Caco-2 (cell line): ENCODE measurements at regions of chr1 and their contacts with region 1.

Region 1: GRCh38 chr1:171644805-171645483 is 7.5 kb downstream of the MYOC start:
- DNase-seq: peak; percentile 83 to 88
- H3K4me3 ChIP-seq: no peak overlapping the region
- H3K4me3 Mint-ChIP-seq: no peak overlapping the region
- H3K27ac Mint-ChIP-seq: no peak overlapping the region
- H3K4me1 ChIP-seq: no peaks in the 10 kb centered on the region; the same call in 1 of the 2 replicates
- H3K4me1 Mint-ChIP-seq: peaks cover 10% of the 10 kb centered on the region
- H3K27me3 ChIP-seq: no peaks in the 10 kb centered on the region
- H3K27me3 Mint-ChIP-seq: peaks cover under 1% of the 10 kb centered on the region
- CTCF ChIP-seq: peak; percentile 79 to 82

Region 2: DNA sequence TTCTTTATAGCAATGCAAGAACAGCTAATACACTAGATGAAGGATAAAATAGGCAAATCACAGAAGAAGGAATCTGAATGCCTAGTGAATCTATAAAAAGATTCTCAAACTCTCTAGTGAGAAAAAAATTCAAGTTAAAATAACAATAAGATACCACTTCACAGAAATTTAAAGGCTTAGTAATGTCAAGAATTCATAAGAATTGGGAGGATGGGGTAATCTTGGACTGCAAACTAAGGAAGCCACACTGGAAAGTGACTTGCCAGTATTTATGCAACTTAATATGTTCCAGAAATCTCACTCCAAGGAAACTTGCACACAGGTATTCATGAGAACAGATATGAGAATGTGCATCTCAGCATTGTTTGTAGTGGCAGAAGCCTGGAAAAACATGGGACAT is 198.6 kb before region 1 on chr1:
- CTCF ChIA-PET with region 1: no interaction called
- POLR2A ChIA-PET with region 1: no interaction called
- intact Hi-C with region 1: no loop called
- DNase-seq: no peak
- H3K4me3 ChIP-seq: no peak overlapping the region
- H3K4me3 Mint-ChIP-seq: no peak overlapping the region
- H3K27ac Mint-ChIP-seq: no peak overlapping the region
- H3K4me1 ChIP-seq: no peaks in the 10 kb centered on the region
- H3K4me1 Mint-ChIP-seq: no peaks in the 10 kb centered on the region
- H3K27me3 ChIP-seq: no peaks in the 10 kb centered on the region
- H3K27me3 Mint-ChIP-seq: no peaks in the 10 kb centered on the region
- CTCF ChIP-seq: no peak

Region 3: DNA sequence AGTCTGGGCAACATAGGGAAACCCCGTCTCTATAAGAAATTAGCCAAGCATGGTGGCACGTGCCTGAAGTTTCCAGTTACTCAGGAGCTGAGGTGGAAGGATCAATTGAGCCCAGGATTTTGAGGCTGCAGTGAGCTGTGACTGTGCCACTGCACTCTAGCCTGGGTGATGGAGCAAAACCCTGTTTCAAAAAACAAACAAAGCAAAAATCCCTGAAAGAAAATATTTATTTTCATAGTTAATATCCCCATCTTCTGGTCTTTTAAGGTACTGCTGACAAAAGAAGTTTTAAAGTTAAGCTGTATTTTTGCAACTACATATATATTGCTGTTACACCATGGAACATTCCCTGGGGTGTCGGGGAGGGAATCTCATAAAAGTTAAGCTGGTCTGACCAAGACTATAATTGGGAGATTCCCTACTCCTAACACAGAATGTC is 70.9 kb after region 1 on chr1:
- CTCF ChIA-PET with region 1: interaction called, 66 read pairs
- POLR2A ChIA-PET with region 1: no interaction called
- intact Hi-C with region 1: loop called (anchors 1 kb)
- DNase-seq: peak in 1 of 2 experiments; percentile 8
- H3K4me3 ChIP-seq: no peak overlapping the region
- H3K4me3 Mint-ChIP-seq: no peak overlapping the region
- H3K27ac Mint-ChIP-seq: no peak overlapping the region
- H3K4me1 ChIP-seq: no peaks in the 10 kb centered on the region
- H3K4me1 Mint-ChIP-seq: no peaks in the 10 kb centered on the region
- H3K27me3 ChIP-seq: no peaks in the 10 kb centered on the region
- H3K27me3 Mint-ChIP-seq: no peaks in the 10 kb centered on the region
- CTCF ChIP-seq: peak; percentile 13 to 53

Region 4: GRCh38 chr1:171741872-171742576 is 97.1 kb after region 1 on chr1 and contains the start of gene VAMP4:
- CTCF ChIA-PET with region 1: interaction called, 18 read pairs
- POLR2A ChIA-PET with region 1: no interaction called
- intact Hi-C with region 1: loop called (anchors 1 kb)
- DNase-seq: peak; percentile 83 to 87
- H3K4me3 ChIP-seq: peak within 1 kb of the TSS; percentile 86
- H3K4me3 Mint-ChIP-seq: peak within 1 kb of the TSS; percentile 93
- H3K27ac Mint-ChIP-seq: peak within 1 kb of the TSS; percentile 92
- H3K4me1 ChIP-seq: 0 out of 2 replicates have a peak, but pooled peaks cover 7% of the 10 kb centered on the region
- H3K4me1 Mint-ChIP-seq: peaks cover 7% of the 10 kb centered on the region
- H3K27me3 ChIP-seq: no peaks in the 10 kb centered on the region
- H3K27me3 Mint-ChIP-seq: no peaks in the 10 kb centered on the region
- CTCF ChIP-seq: no peak
- total RNA-seq, gene VAMP4: 4.3 and 4.9 TPM in 2 replicates

Region 5: GRCh38 chr1:171781176-171781875 is 136.4 kb after region 1 on chr1 and contains the start of gene METTL13:
- CTCF ChIA-PET with region 1: interaction called, 4 read pairs
- POLR2A ChIA-PET with region 1: no interaction called
- intact Hi-C with region 1: loop called (anchors 1 kb)
- DNase-seq: peak; percentile 99
- H3K4me3 ChIP-seq: peak within 1 kb of the TSS; percentile 97
- H3K4me3 Mint-ChIP-seq: peak within 1 kb of the TSS; percentile 91
- H3K27ac Mint-ChIP-seq: peak within 1 kb of the TSS; percentile 97
- H3K4me1 ChIP-seq: no peaks in the 10 kb centered on the region; the same call in 1 of the 2 replicates
- H3K4me1 Mint-ChIP-seq: peaks cover 6% of the 10 kb centered on the region
- H3K27me3 ChIP-seq: no peaks in the 10 kb centered on the region
- H3K27me3 Mint-ChIP-seq: no peaks in the 10 kb centered on the region
- CTCF ChIP-seq: no peak
- total RNA-seq, gene METTL13: 36.9 and 40.4 TPM in 2 replicates

Region 6: GRCh38 chr1:171801487-171801891 is 156.5 kb after region 1 on chr1:
- CTCF ChIA-PET with region 1: no interaction called
- POLR2A ChIA-PET with region 1: no interaction called
- intact Hi-C with region 1: loop called (anchors 2 kb)
- DNase-seq: peak in 1 of 2 experiments; percentile 55
- H3K4me3 ChIP-seq: no peak overlapping the region
- H3K4me3 Mint-ChIP-seq: no peak overlapping the region
- H3K27ac Mint-ChIP-seq: no peak overlapping the region
- H3K4me1 ChIP-seq: no peaks in the 10 kb centered on the region
- H3K4me1 Mint-ChIP-seq: no peaks in the 10 kb centered on the region
- H3K27me3 ChIP-seq: no peaks in the 10 kb centered on the region
- H3K27me3 Mint-ChIP-seq: no peaks in the 10 kb centered on the region
- CTCF ChIP-seq: peak; percentile 59 to 76

Region 7: GRCh38 chr1:171984850-171985485 is 340.0 kb after region 1 on chr1:
- CTCF ChIA-PET with region 1: interaction called, 3 read pairs
- POLR2A ChIA-PET with region 1: no interaction called
- intact Hi-C with region 1: loop called (anchors 5 kb)
- DNase-seq: peak in 1 of 2 experiments; percentile 24
- H3K4me3 ChIP-seq: no peak overlapping the region
- H3K4me3 Mint-ChIP-seq: no peak overlapping the region
- H3K27ac Mint-ChIP-seq: no peak overlapping the region
- H3K4me1 ChIP-seq: no peaks in the 10 kb centered on the region; the same call in 1 of the 2 replicates
- H3K4me1 Mint-ChIP-seq: peaks cover 1% of the 10 kb centered on the region
- H3K27me3 ChIP-seq: no peaks in the 10 kb centered on the region
- H3K27me3 Mint-ChIP-seq: peaks cover 3% of the 10 kb centered on the region
- CTCF ChIP-seq: peak; percentile 71 to 84